Left colon (tissue), 2 donors: ENCODE measurements at regions of chr20 and their contacts with region 1.

Region 1: DNA sequence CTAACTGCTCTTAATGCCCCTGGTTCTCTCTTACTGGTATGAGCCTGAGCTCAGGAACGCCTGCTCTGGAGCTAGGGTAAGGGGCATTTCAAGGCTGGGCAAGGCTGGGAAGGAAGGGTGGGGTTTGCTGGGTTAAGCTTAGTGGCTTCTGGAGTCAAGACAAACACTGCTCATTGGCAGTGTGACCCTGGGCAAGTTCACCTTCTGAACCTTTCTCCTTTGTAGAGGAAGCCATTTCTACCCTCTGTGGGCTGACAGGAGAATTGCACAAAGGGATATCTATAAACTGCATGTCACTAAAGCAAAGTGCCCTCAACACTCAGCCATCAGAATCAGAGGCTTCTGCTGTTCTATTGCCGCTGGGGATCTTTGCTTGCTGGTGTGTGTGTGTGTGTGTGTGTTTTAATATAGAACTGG is 20.3 kb upstream of the LRRN4 start:
- DNase-seq: no peak
- ATAC-seq: peak; percentile 30

Region 2: DNA sequence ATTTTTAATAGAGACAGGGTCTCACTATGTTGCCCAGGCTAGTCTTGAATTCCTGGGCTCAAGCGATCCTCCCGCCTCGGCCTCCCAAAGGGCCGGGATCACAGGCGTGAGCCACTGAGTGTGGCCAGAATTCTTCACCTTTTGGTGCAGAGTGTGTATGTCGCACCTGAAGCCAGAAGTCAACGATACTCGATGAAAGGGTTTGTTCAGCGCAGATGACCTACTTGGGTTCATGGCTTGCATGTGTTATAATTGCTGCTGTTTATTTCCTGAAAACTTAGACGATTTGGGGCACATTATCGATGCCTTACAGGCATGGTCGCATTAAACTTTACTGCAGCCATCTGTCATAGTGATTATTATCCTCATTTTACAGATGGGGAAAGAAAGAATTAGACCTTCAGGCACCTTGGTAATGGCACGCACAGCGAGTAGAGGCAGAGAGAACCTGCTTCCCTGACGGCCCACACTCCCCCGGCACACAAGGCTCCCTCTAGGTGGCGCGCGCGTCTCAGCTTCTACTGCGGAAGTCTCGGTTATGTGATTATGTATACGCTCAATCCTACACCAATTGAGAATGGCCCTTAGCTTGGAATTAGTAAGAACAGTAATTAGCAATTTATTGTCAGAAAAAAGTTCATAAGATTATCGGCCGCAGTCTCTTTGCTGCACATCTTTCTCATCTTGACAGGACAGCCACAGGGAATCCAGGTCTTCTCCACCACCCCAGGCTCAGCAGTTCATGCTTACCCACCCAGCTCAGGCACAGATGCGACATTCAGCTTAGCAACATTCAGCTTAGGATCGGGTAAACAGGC is 544.6 kb before region 1 on chr20:
- intact Hi-C with region 1: loop called (anchors 5 to 10 kb)
- DNase-seq: peak; percentile 80 to 96
- ATAC-seq: peak; percentile 92